ENCODE measurements at regions of chr19 and their contacts with region 1.

Region 1: DNA sequence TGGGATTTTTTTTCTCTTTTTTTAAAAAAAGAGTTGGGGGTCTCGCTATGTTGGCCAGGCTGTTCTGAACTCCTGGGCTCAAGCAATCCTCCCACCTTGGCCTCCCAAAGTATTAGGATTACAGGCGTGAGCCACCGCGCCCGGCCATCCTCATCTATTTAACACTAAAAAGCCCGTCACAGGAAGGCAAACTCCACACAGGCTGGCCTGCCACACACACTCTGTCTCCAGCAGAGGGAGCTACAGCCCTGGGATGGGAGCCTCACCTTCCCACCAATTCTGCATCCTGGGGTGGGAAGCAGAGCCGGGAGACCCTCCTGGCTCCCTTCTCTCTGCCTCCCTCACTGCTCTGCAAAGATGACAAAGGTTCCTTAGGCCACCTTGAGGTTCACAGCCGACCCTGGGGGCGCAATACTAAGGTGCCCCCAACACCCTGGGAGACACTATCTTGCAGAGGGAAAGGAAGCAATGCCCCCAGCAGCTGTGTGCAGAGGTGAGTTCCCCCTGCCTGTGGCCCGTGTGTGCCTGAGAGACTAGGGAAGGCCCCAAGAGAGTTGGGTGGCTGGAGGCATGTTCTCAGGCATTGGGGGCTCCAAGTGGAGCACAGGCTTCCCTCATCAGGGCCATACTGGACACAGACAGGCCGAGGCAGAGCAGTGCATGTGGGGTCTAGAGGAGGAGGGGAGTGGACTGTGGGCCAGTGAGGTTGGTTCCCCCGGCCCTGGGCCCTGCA is 27.4 kb upstream of the TIMM44 start:
- DNase-seq: peak; percentile 26 to 44 (median 33)
- H3K4me3 ChIP-seq: no peak overlapping the region
- H3K27ac ChIP-seq: no peak overlapping the region
- H3K4me1 ChIP-seq: peaks cover 0 to 9% (median 6%) of the 10 kb centered on the region in 4 experiments
- H3K27me3 ChIP-seq: no peaks in the 10 kb centered on the region

Region 2: DNA sequence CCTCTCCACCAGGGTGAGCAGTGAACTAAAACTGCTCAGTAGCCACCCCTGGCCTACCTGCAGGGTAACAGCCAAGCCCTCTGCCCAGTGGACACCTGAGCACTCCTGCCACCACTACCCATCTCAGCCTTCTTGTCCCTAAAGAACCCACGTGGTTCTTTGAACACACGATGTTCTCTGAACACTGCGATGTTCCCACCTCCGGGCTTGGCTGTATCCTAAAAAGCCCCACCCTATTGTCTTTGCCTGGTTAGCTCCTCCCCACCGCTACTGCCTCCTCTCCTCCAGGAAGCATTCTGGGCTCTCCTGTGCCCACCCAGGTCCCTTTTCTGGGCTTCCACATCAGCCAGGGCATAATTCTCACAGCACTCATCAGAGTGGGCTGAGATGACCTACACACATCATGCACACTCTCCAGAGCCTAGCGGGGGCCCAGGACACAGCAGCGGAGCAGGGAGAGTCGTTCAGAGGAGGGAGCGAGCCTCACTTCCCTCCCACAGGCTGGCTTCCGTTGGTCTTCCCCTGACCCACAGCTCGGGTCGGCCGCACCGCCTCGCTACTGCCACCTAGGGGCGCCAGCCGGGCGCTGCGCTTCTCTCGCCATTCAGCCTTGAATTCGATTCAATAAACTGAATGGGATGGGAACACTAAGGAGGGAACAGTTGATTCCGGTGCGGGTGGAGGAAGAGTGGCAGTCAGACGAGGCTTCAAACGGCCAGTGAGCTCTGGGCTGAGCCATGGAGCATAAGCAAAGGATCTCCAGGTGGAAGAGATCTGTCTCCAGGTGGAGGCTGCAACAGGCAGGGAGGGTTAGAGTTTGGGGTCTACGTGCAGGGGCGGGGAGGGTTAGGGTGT is 31.3 kb after region 1 on chr19:
- CTCF ChIA-PET with region 1: interaction called, 21 read pairs
- POLR2A ChIA-PET with region 1: no interaction called
- DNase-seq: peak; percentile 57 to 69 (median 66)
- H3K4me3 ChIP-seq: peak overlapping the region in 6 of 7 experiments; percentile 26 to 78 (median 60)
- H3K27ac ChIP-seq: peak overlapping the region in 1 of 2 experiments; percentile 65
- H3K4me1 ChIP-seq: peaks cover 10 to 54% (median 44%) of the 10 kb centered on the region in 4 experiments
- H3K27me3 ChIP-seq: no peaks in the 10 kb centered on the region

Region 3: GRCh38 chr19:8023381-8023780 is 52.5 kb after region 1 on chr19:
- CTCF ChIA-PET with region 1: no interaction called
- POLR2A ChIA-PET with region 1: no interaction called
- DNase-seq: no peak
- H3K4me3 ChIP-seq: no peak overlapping the region
- H3K27ac ChIP-seq: no peak overlapping the region
- H3K4me1 ChIP-seq: peaks cover 0 to 9% (median 5%) of the 10 kb centered on the region in 4 experiments
- H3K27me3 ChIP-seq: no peaks in the 10 kb centered on the region

Measured in common myeloid progenitor, CD34-positive (primary cell).